PC-3 (cell line): ENCODE measurements at regions of chr2 and their contacts with region 1.

Region 1: DNA sequence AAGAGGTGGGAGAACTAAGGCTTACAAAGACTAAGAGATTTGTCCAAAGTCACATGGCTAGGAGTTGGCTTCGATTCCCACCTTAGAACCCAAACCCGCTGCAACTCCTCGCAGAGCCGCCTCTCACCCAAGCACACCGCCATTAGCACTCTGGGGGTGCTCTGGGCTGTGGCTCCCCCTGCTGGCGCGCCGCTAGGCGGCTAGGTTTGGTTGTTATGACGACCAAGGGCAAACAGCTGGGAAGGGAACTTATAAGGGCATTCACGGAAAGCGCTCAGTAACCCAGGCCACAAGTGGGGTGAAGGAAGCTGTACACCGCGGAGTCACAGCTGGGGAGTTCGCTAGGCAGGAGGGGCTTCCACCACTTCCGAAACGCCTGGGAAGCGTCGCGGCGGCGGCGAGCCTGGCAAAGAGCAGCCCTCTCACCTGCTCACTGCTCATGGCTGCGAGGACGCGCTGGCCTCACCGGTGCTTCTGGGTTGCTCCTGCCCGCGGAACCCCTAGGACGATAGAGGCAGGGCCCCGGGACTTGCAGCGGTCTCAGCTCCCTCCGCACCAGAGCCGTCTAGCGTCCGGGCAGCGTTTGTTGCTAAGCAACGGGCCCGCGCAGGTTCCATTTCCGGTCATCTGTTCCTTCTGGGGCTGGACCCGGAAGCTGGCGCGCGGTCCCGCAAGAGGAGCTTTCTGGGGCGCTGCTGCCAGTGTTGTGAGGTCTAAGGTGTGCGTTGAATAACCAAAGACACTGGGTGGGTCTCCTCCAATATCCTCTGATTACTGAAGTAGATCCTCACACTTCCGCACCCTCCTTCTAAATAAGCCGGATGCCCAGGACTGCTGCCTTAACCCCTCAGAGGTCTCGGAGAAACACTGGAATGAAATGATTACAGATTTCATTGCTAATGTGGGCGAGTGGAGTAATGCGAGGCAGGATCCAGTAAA is at the start of gene DNAH7:
- DNase-seq: peak; percentile 77
- ATAC-seq: peak; percentile 93
- H3K4me3 ChIP-seq: peak within 1 kb of the TSS; percentile 83
- H3K27ac ChIP-seq: no peak within 1 kb of the TSS
- H3K4me1 ChIP-seq: peaks cover 15% of the 10 kb centered on the region
- H3K27me3 ChIP-seq: no peaks in the 10 kb centered on the region
- CTCF ChIP-seq: peak; percentile 67
- total RNA-seq, gene DNAH7: 1.9 and 3.1 TPM in 2 replicates

Region 2: GRCh38 chr2:195575879-195576401 is 492.6 kb before region 1 on chr2:
- CTCF ChIA-PET with region 1: no interaction called
- POLR2A ChIA-PET with region 1: no interaction called
- intact Hi-C with region 1: loop called (anchors 5 kb)
- DNase-seq: peak; percentile 94
- ATAC-seq: peak; percentile 87
- H3K4me3 ChIP-seq: no peak overlapping the region; the same call in 1 of the 2 replicates
- H3K27ac ChIP-seq: peak overlapping the region; percentile 45
- H3K4me1 ChIP-seq: peaks cover 13% of the 10 kb centered on the region
- H3K27me3 ChIP-seq: no peaks in the 10 kb centered on the region
- CTCF ChIP-seq: peak; percentile 59

Region 3: GRCh38 chr2:195664528-195664927 is 404.0 kb before region 1 on chr2:
- CTCF ChIA-PET with region 1: no interaction called
- POLR2A ChIA-PET with region 1: no interaction called
- intact Hi-C with region 1: loop called (anchors 1 kb)
- DNase-seq: peak; percentile 48
- ATAC-seq: peak; percentile 45; the same call in 1 of the 2 replicates
- H3K4me3 ChIP-seq: no peak overlapping the region
- H3K27ac ChIP-seq: no peak overlapping the region
- H3K4me1 ChIP-seq: peaks cover 6% of the 10 kb centered on the region
- H3K27me3 ChIP-seq: no peaks in the 10 kb centered on the region
- CTCF ChIP-seq: peak; percentile 44

Region 4: GRCh38 chr2:195672668-195673067 is 395.9 kb before region 1 on chr2:
- CTCF ChIA-PET with region 1: no interaction called
- POLR2A ChIA-PET with region 1: interaction called, 10 read pairs
- intact Hi-C with region 1: no loop called
- DNase-seq: peak; percentile 24
- ATAC-seq: no peak
- H3K4me3 ChIP-seq: no peak overlapping the region
- H3K27ac ChIP-seq: no peak overlapping the region
- H3K4me1 ChIP-seq: peaks cover under 1% of the 10 kb centered on the region; the same call in 1 of the 2 replicates
- H3K27me3 ChIP-seq: no peaks in the 10 kb centered on the region
- CTCF ChIP-seq: peak; percentile 51